H1 (cell line): ENCODE measurements at regions of chr10 and their contacts with region 1.

Region 1: DNA sequence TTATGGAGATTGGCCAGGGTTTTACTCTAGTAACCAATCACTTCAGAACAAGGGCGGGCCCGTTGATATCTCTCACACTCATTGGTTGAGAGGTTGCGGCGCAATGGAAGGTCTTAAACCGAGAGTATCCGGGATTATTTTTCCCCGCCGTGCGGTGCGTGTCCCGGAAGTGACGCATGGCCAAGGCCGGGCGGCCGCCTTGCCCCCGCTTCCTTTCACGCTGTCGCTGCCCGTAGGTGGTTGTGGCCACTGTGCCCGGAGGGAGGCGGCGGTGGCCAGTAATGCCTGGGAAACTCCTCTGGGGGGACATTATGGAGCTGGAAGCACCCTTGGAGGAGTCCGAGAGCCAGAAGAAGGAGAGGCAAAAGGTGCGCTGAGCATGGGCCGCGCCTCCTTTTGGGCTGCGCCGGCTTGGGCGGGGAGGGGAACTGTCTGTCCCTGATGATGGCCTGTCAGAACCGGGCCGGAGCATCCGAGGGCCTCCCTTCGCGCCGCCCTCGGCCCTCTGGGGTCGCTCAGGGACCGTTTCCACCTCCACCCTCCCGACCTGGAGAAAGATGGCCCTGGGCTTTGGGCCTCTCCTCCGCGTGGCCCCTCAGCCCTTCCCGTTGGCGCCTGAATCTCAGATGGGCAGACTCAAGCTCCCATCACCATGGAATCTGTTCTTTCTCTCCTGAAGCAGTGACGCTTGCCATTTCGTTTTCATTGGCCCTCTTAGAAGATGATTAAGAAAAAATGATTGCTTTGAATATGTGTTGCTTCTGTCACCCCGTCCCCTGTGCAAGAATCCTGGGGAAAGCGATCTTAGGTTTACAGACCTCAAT is at the start of gene DDX50:
- DNase-seq: peak; percentile 82 to 97
- H3K4me3 ChIP-seq: peak within 1 kb of the TSS; percentile 86 to 92 (median 89)
- H3K27ac ChIP-seq: peak within 1 kb of the TSS; percentile 98
- H3K4me1 ChIP-seq: peaks cover 0 to 6% (median 4%) of the 10 kb centered on the region in 4 experiments; a peak in 5 of 7 replicates
- H3K27me3 ChIP-seq: no peaks in the 10 kb centered on the region
- CTCF ChIP-seq: peak in 1 of 3 experiments; percentile 13; a peak in 1 of 4 replicates
- EP300 ChIP-seq: no peak
- POLR2A ChIP-seq: peak in 1 of 2 experiments; percentile 93; a peak in 2 of 3 replicates
- RAD21 ChIP-seq: no peak
- total RNA-seq, gene DDX50: 36.5 and 39.0 TPM in 2 replicates

Region 2: GRCh38 chr10:68792115-68792514 is 109.2 kb before region 1 on chr10:
- CTCF ChIA-PET with region 1: interaction called, 15 read pairs
- POLR2A ChIA-PET with region 1: interaction called, 25 read pairs
- DNase-seq: no peak
- H3K4me3 ChIP-seq: no peak overlapping the region
- H3K27ac ChIP-seq: no peak overlapping the region
- H3K4me1 ChIP-seq: no peaks in the 10 kb centered on the region
- H3K27me3 ChIP-seq: no peaks in the 10 kb centered on the region
- CTCF ChIP-seq: no peak; a peak in 1 of 4 replicates
- EP300 ChIP-seq: no peak
- POLR2A ChIP-seq: no peak
- RAD21 ChIP-seq: peak in 1 of 2 experiments; percentile 25; a peak in 1 of 4 replicates

Region 3: GRCh38 chr10:68800196-68800595 is 101.1 kb before region 1 on chr10:
- CTCF ChIA-PET with region 1: interaction called, 40 read pairs
- POLR2A ChIA-PET with region 1: interaction called, 25 read pairs
- DNase-seq: no peak
- H3K4me3 ChIP-seq: no peak overlapping the region
- H3K27ac ChIP-seq: no peak overlapping the region
- H3K4me1 ChIP-seq: no peaks in the 10 kb centered on the region
- H3K27me3 ChIP-seq: no peaks in the 10 kb centered on the region
- CTCF ChIP-seq: no peak
- EP300 ChIP-seq: no peak
- POLR2A ChIP-seq: no peak
- RAD21 ChIP-seq: no peak

Region 4: DNA sequence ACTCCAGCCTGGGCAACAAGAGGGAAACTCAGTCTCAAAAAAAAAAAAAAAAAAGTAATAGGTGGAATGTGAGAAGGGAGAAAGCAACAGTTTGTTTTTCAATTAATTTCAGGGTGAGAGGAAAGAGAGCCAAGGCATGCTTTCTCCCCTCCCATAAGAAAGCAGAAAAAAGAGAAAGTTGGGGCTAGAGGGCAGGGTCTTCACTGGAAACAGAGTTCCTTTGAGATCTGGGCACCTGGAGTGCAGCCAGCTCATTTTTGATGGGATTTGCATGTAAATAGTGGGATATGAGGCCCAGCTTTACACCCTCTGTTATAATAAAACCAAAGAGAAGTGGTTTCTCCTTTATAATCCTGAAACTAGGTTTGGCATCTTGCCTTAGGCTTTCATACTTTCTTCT is 87.8 kb before region 1 on chr10:
- CTCF ChIA-PET with region 1: interaction called, 18 read pairs
- POLR2A ChIA-PET with region 1: interaction called, 7 read pairs
- DNase-seq: no peak
- H3K4me3 ChIP-seq: no peak overlapping the region
- H3K27ac ChIP-seq: no peak overlapping the region
- H3K4me1 ChIP-seq: 0 out of 7 replicates have a peak, but pooled peaks cover 0 to 3% (median 0%) of the 10 kb centered on the region in 4 experiments
- H3K27me3 ChIP-seq: no peaks in the 10 kb centered on the region
- CTCF ChIP-seq: no peak
- EP300 ChIP-seq: no peak
- POLR2A ChIP-seq: no peak
- RAD21 ChIP-seq: no peak

Region 5: GRCh38 chr10:68829521-68829920 is 71.8 kb before region 1 on chr10:
- CTCF ChIA-PET with region 1: interaction called, 11 read pairs
- POLR2A ChIA-PET with region 1: interaction called, 10 read pairs
- DNase-seq: no peak
- H3K4me3 ChIP-seq: no peak overlapping the region
- H3K27ac ChIP-seq: no peak overlapping the region
- H3K4me1 ChIP-seq: peaks cover 0 to 2% (median 0%) of the 10 kb centered on the region in 4 experiments; a peak in 1 of 7 replicates
- H3K27me3 ChIP-seq: peaks cover 0 to 13% (median 12%) of the 10 kb centered on the region in 4 experiments; a peak in 5 of 7 replicates
- CTCF ChIP-seq: no peak
- EP300 ChIP-seq: no peak
- POLR2A ChIP-seq: no peak
- RAD21 ChIP-seq: no peak

Region 6: DNA sequence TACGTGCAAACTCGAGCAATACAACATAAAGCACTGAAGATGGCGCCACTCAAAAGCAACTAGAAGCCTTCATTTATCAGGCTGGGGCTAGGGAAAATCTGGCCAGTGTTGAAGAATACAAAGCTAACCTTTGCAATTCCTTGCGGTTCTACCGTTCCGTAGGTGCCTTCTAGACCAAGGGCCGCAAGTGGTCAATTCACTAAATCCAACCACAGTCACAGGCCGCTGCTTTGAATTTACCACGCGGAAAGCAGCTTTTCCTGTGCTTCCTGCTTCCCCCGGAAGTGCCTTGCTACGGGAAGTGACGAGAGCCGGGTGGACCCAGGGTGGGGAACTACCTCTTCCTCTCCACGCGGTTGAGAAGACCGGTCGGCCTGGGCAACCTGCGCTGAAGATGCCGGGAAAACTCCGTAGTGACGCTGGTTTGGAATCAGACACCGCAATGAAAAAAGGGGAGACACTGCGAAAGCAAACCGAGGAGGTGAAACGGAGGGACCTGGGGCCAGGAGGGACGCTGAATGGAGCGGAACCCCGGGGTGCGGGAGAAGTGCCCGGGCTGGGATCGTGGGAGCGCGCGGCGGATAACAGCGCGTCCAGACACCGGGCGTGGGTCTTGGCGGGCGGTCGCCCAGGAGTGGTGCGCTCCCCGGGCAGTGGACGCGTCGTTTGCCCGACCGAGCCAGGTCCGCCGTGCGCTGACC is 54.7 kb after region 1 on chr10 and contains the start of gene DDX21:
- CTCF ChIA-PET with region 1: interaction called, 4 read pairs
- POLR2A ChIA-PET with region 1: interaction called, 30 read pairs
- DNase-seq: peak; percentile 63 to 81
- H3K4me3 ChIP-seq: peak within 1 kb of the TSS; percentile 92 to 99 (median 96)
- H3K27ac ChIP-seq: peak within 1 kb of the TSS; percentile 91
- H3K4me1 ChIP-seq: no peaks in the 10 kb centered on the region; a peak in 3 of 7 replicates
- H3K27me3 ChIP-seq: no peaks in the 10 kb centered on the region
- CTCF ChIP-seq: peak in 2 of 3 experiments; percentile 36 to 73; a peak in 3 of 4 replicates
- EP300 ChIP-seq: no peak
- POLR2A ChIP-seq: peak; percentile 56 to 74; a peak in 2 of 3 replicates
- RAD21 ChIP-seq: peak in 1 of 2 experiments; percentile 8; a peak in 1 of 4 replicates
- total RNA-seq, gene DDX21: 189 and 195 TPM in 2 replicates